ENCODE measurements at regions of chr11 and their contacts with region 1.

Region 1: GRCh38 chr11:19742588-19743292 is 30.1 kb downstream of the NAV2 start:
- DNase-seq: peak; percentile 56 to 79
- ATAC-seq: peak; percentile 75 to 92 (median 91)
- H3K4me3 ChIP-seq: no peak overlapping the region
- H3K4me3 Mint-ChIP-seq: no peak overlapping the region
- H3K27ac ChIP-seq: no peak overlapping the region
- H3K27ac Mint-ChIP-seq: no peak overlapping the region
- H3K4me1 ChIP-seq: no peaks in the 10 kb centered on the region
- H3K4me1 Mint-ChIP-seq: no peaks in the 10 kb centered on the region
- H3K27me3 ChIP-seq: no peaks in the 10 kb centered on the region
- H3K27me3 Mint-ChIP-seq: peaks cover 0 to 2% of the 10 kb centered on the region in 2 donors
- CTCF ChIP-seq: peak; percentile 83

Region 2: GRCh38 chr11:19259487-19260345 is 483.0 kb before region 1 on chr11:
- intact Hi-C with region 1: loop called (anchors 2 kb)
- DNase-seq: peak; percentile 58 to 76
- ATAC-seq: peak; percentile 87 to 99 (median 97)
- H3K4me3 ChIP-seq: no peak overlapping the region
- H3K4me3 Mint-ChIP-seq: no peak overlapping the region
- H3K27ac ChIP-seq: no peak overlapping the region
- H3K27ac Mint-ChIP-seq: no peak overlapping the region
- H3K4me1 ChIP-seq: no peaks in the 10 kb centered on the region
- H3K4me1 Mint-ChIP-seq: peaks cover 0 to 7% of the 10 kb centered on the region in 2 donors
- H3K27me3 ChIP-seq: no peaks in the 10 kb centered on the region
- H3K27me3 Mint-ChIP-seq: peaks cover 0 to 6% of the 10 kb centered on the region in 2 donors
- CTCF ChIP-seq: peak; percentile 98

Region 3: DNA sequence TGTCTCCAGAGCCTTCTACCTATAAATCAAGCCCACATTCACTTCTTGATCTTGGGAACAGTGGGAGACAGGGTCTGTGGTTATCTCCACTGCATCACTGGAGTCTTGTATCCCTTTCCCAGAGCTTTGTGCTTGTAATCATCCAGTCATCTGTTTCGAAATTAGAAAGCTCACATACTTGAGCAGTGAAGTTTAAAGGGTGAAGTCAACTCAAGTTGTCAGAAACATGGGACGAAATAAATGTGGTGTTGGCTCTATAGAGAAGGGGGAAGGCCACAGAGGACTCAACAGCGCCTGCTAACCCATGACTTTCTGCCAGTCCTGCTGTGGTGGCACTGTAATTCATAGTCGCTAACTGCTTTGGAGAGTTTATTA is 220.0 kb after region 1 on chr11:
- intact Hi-C with region 1: no loop called
- DNase-seq: no peak
- ATAC-seq: no peak
- H3K4me3 ChIP-seq: no peak overlapping the region
- H3K4me3 Mint-ChIP-seq: no peak overlapping the region
- H3K27ac ChIP-seq: no peak overlapping the region
- H3K27ac Mint-ChIP-seq: no peak overlapping the region
- H3K4me1 ChIP-seq: peaks cover 21% of the 10 kb centered on the region
- H3K4me1 Mint-ChIP-seq: peaks cover 33% of the 10 kb centered on the region in 2 donors
- H3K27me3 ChIP-seq: peaks cover 9% of the 10 kb centered on the region
- H3K27me3 Mint-ChIP-seq: peaks cover 48 to 73% of the 10 kb centered on the region in 2 donors
- CTCF ChIP-seq: no peak

Measured in natural killer cell (primary cell).